ENCODE measurements at regions of chr2 and their contacts with region 1.

Region 1: GRCh38 chr2:182866461-182867406 is at the start of gene FRZB:
- DNase-seq: peak; percentile 28
- ATAC-seq: peak; percentile 93
- H3K4me3 ChIP-seq: peak within 1 kb of the TSS; percentile 42 to 68 (median 60)
- H3K27ac ChIP-seq: no peak within 1 kb of the TSS
- H3K4me1 ChIP-seq: peaks cover 34% of the 10 kb centered on the region
- H3K27me3 ChIP-seq: peaks cover 3 to 20% of the 10 kb centered on the region in 2 experiments; a peak in 2 of 5 replicates
- CTCF ChIP-seq: peak; percentile 39
- EP300 ChIP-seq: no peak
- POLR2A ChIP-seq: no peak
- RAD21 ChIP-seq: no peak
- total RNA-seq, gene FRZB: 0.04 TPM in 1 of 2 replicates, not detected in the other

Region 2: GRCh38 chr2:182586432-182586831 is 280.3 kb before region 1 on chr2:
- CTCF ChIA-PET with region 1: no interaction called
- POLR2A ChIA-PET with region 1: no interaction called
- in situ Hi-C with region 1: no loop called
- intact Hi-C with region 1: no loop called
- DNase-seq: no peak
- ATAC-seq: no peak
- H3K4me3 ChIP-seq: no peak overlapping the region
- H3K27ac ChIP-seq: no peak overlapping the region
- H3K4me1 ChIP-seq: no peaks in the 10 kb centered on the region
- H3K27me3 ChIP-seq: no peaks in the 10 kb centered on the region
- CTCF ChIP-seq: no peak
- EP300 ChIP-seq: no peak
- POLR2A ChIP-seq: no peak
- RAD21 ChIP-seq: no peak

Region 3: DNA sequence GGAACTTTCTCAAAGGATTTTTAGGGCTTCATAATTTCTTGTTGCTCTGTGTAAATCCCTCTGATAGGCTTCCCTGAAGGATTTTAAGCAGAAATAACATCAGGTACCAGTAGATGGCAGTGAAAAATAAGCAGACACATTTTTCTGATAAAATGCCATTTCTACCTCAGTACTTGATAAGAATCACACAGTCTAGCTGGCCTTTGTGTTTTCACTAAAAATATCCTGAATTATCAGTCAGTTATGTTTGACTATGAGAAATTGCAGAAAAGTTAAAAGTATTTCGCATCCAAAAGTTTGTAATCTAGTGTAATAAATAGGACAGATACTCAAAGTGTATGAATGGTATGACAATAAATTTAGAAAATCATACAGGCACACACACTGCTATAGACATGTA is 82.0 kb before region 1 on chr2:
- CTCF ChIA-PET with region 1: no interaction called
- POLR2A ChIA-PET with region 1: no interaction called
- in situ Hi-C with region 1: no loop called
- intact Hi-C with region 1: loop called (anchors 1 kb)
- DNase-seq: peak; percentile 52
- ATAC-seq: peak; percentile 70
- H3K4me3 ChIP-seq: no peak overlapping the region
- H3K27ac ChIP-seq: no peak overlapping the region
- H3K4me1 ChIP-seq: no peaks in the 10 kb centered on the region
- H3K27me3 ChIP-seq: no peaks in the 10 kb centered on the region
- CTCF ChIP-seq: peak; percentile 75
- EP300 ChIP-seq: no peak
- POLR2A ChIP-seq: no peak
- RAD21 ChIP-seq: peak; percentile 38; the same call in 1 of the 2 replicates

Region 4: GRCh38 chr2:182914847-182915246 is 48.1 kb after region 1 on chr2:
- CTCF ChIA-PET with region 1: no interaction called
- POLR2A ChIA-PET with region 1: no interaction called
- in situ Hi-C with region 1: no loop called
- intact Hi-C with region 1: loop called (anchors 5 kb)
- DNase-seq: no peak
- ATAC-seq: peak; percentile 50
- H3K4me3 ChIP-seq: no peak overlapping the region
- H3K27ac ChIP-seq: no peak overlapping the region
- H3K4me1 ChIP-seq: peaks cover 15% of the 10 kb centered on the region
- H3K27me3 ChIP-seq: no peaks in the 10 kb centered on the region
- CTCF ChIP-seq: no peak
- EP300 ChIP-seq: no peak
- POLR2A ChIP-seq: no peak
- RAD21 ChIP-seq: no peak

Measured in HepG2 (cell line).